MCF 10A (cell line): ENCODE measurements at regions of chr9 and their contacts with region 1.

Region 1: DNA sequence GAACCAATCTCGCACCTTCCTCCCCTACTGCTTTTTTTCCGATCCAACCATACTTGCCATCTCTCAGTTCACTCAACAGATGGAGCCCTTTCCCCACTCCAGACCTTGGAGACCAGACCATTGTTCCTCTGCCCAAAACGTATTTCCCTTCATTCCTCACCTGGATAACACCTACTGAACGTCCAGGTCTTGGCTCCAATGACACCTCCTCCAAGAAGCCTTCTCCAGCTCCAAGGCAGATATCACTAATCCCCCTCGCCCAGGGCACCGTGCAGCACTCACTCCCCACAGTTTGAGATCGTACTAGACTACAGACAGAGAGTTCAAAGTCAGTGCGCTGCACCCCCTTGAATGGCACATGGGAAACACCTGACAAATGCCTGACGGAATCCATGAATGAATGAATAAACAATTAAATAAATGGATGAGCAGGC is 47.1 kb upstream of the AKNA start:
- DNase-seq: peak; percentile 61
- H3K4me3 Mint-ChIP-seq: no peak overlapping the region
- H3K27ac Mint-ChIP-seq: no peak overlapping the region
- H3K4me1 Mint-ChIP-seq: no peaks in the 10 kb centered on the region
- H3K27me3 Mint-ChIP-seq: no peaks in the 10 kb centered on the region
- CTCF ChIP-seq: peak; percentile 79

Region 2: DNA sequence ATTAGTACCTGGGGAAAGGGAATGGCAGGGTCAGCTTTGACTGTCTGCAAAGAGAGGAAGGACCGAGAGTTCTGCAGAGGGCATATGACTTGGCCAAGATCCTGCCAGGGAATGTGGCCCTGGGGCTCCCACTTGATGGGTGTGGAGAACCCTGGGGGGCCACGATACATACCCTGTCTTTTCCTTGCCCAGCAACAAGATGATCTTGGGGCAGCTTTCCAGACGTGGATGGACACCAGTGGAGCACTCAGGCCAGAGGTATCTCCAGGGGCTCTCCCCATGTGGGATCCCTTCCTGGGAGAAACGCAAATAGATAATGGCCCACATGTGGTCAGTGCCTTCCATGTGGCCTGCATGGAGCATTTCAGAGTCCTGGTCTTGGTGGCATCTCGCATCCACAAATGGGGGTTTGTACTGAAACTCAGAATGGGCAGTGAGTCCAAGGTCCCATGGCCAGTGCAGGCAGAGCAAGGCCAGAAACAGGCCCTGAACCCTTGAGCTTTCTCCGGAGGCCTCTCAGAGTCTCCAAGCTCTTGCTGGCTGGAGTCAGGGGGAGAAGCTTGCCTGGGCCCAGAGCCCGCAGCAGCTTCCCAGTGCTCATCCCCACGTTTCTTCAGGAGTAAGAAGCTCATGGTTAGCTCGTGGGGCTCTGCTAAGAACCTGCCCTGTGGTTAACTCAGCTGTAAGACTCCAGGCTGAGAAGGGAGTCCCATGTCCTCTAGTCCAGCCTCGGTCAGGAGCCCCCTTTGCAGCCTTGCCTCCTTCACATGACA is 130.3 kb before region 1 on chr9:
- CTCF ChIA-PET with region 1: no interaction called
- POLR2A ChIA-PET with region 1: no interaction called
- intact Hi-C with region 1: no loop called
- DNase-seq: no peak
- H3K4me3 Mint-ChIP-seq: no peak overlapping the region
- H3K27ac Mint-ChIP-seq: no peak overlapping the region
- H3K4me1 Mint-ChIP-seq: no peaks in the 10 kb centered on the region
- H3K27me3 Mint-ChIP-seq: no peaks in the 10 kb centered on the region
- CTCF ChIP-seq: no peak

Region 3: GRCh38 chr9:114420581-114420980 is 14.3 kb before region 1 on chr9:
- CTCF ChIA-PET with region 1: interaction called, 12 read pairs
- POLR2A ChIA-PET with region 1: interaction called, 3 read pairs
- intact Hi-C with region 1: no loop called
- DNase-seq: no peak
- H3K4me3 Mint-ChIP-seq: no peak overlapping the region
- H3K27ac Mint-ChIP-seq: no peak overlapping the region
- H3K4me1 Mint-ChIP-seq: no peaks in the 10 kb centered on the region
- H3K27me3 Mint-ChIP-seq: no peaks in the 10 kb centered on the region
- CTCF ChIP-seq: no peak

Region 4: DNA sequence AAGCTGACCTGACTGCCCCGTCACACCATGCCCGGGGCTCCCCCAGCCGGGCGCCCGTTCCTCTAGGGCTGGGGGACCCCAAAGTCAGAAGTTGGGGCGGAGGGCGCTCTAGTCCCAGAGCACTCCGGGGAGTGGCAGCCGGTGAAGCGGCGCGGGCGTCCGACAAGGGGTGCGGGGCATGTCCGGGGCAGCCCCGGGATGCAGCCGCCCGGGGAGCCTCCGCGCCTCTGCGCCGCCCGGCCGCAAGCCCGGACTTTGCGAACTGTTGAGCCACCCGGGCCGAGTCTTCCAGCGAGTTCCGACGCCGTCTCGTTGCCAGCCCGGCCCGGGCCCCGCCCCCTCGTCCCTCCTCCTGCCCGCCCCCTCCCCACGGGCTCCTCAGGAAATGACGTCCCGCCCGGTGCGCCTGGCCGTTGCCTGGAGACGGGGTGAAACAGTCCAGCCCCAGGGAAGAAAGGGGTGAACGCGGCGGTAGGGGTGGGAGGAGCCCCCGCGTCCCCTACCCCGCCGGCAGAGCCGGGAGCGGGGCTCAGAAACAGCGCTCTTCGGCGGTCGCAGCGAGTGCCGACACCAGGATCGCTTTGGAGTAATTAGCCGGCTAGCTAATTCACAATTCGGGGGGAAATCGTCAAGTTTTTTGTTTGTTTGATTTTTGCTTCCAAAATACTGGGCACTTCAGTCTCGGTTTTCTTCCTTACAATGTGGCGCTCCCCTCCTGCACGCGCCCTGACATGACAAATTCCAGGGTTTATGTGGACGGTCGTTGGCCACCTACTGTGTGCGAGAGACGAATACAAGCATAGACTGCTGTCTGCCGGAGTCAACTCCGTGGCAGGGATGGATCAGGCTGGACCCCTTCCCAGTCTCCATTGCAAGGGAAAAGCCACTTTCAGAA is 70.5 kb after region 1 on chr9 and contains the start of gene WHRN:
- CTCF ChIA-PET with region 1: interaction called, 54 read pairs
- POLR2A ChIA-PET with region 1: interaction called, 3 read pairs
- intact Hi-C with region 1: loop called (anchors 1 kb)
- DNase-seq: peak; percentile 86
- H3K4me3 Mint-ChIP-seq: peak within 1 kb of the TSS; percentile 85
- H3K27ac Mint-ChIP-seq: peak within 1 kb of the TSS; percentile 94
- H3K4me1 Mint-ChIP-seq: peaks cover 27% of the 10 kb centered on the region
- H3K27me3 Mint-ChIP-seq: peaks cover 29% of the 10 kb centered on the region
- CTCF ChIP-seq: no peak
- total RNA-seq, gene WHRN: 9.4 and 12.8 TPM in 2 replicates

Region 5: DNA sequence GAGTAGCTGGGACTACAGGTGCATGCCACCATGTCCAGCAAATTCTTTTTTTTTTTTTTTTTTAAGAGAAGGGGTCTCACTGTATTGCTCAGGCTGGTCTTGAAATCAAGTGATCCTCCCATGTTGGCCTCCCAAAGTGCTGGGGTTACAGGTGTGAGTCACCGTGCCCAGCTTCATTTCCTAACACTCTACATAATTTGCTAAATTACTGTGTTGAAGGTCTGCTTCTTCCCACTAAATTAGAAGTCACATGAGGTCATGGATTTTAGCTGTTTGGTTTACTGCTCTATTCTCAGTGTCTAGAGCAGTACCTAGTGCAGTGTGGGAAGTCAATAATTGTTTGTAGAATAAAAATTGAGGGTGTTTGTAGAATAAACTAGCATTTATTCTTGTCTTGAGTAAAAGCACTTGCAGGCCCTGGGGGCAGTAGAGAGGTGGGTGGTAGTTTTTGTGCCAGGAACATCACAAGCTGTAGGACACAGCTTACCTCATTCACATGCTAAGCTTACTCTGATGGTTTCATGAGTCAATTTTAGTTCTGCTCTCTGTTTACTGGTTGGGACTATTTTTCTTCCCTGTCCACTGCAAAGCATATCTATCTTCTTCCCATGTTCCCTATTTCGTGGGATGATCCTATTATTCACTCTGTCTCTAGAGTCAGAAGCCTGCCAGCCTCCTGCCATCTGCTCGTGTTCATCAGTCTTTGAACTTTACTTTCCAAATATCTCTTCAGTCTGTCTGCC is 240.1 kb after region 1 on chr9:
- CTCF ChIA-PET with region 1: interaction called, 10 read pairs
- POLR2A ChIA-PET with region 1: no interaction called
- intact Hi-C with region 1: no loop called
- DNase-seq: peak; percentile 45
- H3K4me3 Mint-ChIP-seq: no peak overlapping the region
- H3K27ac Mint-ChIP-seq: peak overlapping the region; percentile 3
- H3K4me1 Mint-ChIP-seq: peaks cover 47% of the 10 kb centered on the region
- H3K27me3 Mint-ChIP-seq: no peaks in the 10 kb centered on the region
- CTCF ChIP-seq: no peak

Region 6: GRCh38 chr9:114701988-114702387 is 267.1 kb after region 1 on chr9:
- CTCF ChIA-PET with region 1: no interaction called
- POLR2A ChIA-PET with region 1: no interaction called
- intact Hi-C with region 1: no loop called
- DNase-seq: no peak
- H3K4me3 Mint-ChIP-seq: no peak overlapping the region
- H3K27ac Mint-ChIP-seq: no peak overlapping the region
- H3K4me1 Mint-ChIP-seq: no peaks in the 10 kb centered on the region
- H3K27me3 Mint-ChIP-seq: no peaks in the 10 kb centered on the region
- CTCF ChIP-seq: no peak